ENCODE measurements at regions of chr9 and their contacts with region 1.

Region 1: GRCh38 chr9:123749580-123750202 is 180.2 kb downstream of the DENND1A start:
- DNase-seq: no peak
- ATAC-seq: no peak
- H3K4me3 ChIP-seq: no peak overlapping the region
- H3K27ac ChIP-seq: no peak overlapping the region
- H3K4me1 ChIP-seq: peaks cover 0 to 25% (median 2%) of the 10 kb centered on the region in 12 donors
- H3K27me3 ChIP-seq: no peaks in the 10 kb centered on the region
- CTCF ChIP-seq: no peak
- POLR2A ChIP-seq: no peak

Region 2: GRCh38 chr9:123710299-123710698 is 39.4 kb before region 1 on chr9:
- intact Hi-C with region 1: no loop called
- DNase-seq: no peak
- ATAC-seq: no peak
- H3K4me3 ChIP-seq: no peak overlapping the region
- H3K27ac ChIP-seq: no peak overlapping the region
- H3K4me1 ChIP-seq: no peaks in the 10 kb centered on the region
- H3K27me3 ChIP-seq: no peaks in the 10 kb centered on the region
- CTCF ChIP-seq: no peak
- POLR2A ChIP-seq: no peak

Region 3: DNA sequence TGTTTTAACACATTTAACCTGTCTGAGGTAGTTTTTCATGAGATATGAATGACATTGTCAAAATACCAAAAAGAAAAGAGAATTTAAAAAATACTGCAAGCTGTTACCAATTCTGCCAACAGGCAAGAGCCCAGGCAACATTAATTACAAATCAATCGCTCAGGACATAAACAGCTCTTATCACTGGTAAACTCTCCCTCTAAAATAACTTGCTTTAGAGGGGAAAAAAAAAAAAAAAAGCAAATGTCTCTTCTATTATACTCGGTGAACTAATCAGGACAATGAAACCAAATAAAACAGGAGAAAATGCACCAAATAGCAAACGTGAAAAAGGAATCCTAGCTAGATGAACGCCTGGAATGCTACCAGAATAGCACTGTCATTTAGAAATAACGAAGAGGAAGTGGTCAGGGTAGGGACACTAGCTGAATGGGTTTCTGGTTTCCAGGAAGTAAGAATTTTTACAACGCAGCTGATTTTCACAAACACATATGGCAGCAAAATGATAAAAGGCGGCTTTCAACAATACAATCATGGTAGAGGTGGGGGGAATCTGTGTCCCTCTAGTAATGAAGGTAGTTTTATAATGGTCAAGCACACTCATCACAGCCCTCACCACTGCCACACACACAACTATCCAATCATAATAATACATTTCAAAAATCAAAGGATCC is 85.3 kb after region 1 on chr9:
- intact Hi-C with region 1: loop called in 1 of 10 experiments (anchors 10 kb)
- DNase-seq: no peak
- ATAC-seq: peak in 3 of 4 donors; percentile 60 to 76 (median 75)
- H3K4me3 ChIP-seq: peak overlapping the region in 6 of 12 donors; percentile 8 to 30 (median 24)
- H3K27ac ChIP-seq: peak overlapping the region in 2 of 12 donors; percentile 36 to 77
- H3K4me1 ChIP-seq: peaks cover 0 to 30% (median 7%) of the 10 kb centered on the region in 12 donors
- H3K27me3 ChIP-seq: no peaks in the 10 kb centered on the region
- CTCF ChIP-seq: no peak
- POLR2A ChIP-seq: no peak

Region 4: GRCh38 chr9:123863164-123863855 is 113.6 kb after region 1 on chr9:
- intact Hi-C with region 1: loop called in 1 of 10 experiments (anchors 10 kb)
- DNase-seq: no peak
- ATAC-seq: peak in 1 of 4 donors; percentile 49
- H3K4me3 ChIP-seq: no peak overlapping the region
- H3K27ac ChIP-seq: peak overlapping the region in 1 of 12 donors; percentile 84
- H3K4me1 ChIP-seq: peaks cover 0 to 75% (median 11%) of the 10 kb centered on the region in 12 donors
- H3K27me3 ChIP-seq: no peaks in the 10 kb centered on the region
- CTCF ChIP-seq: no peak
- POLR2A ChIP-seq: no peak

Region 5: GRCh38 chr9:123929870-123930831 is 180.5 kb after region 1 on chr9 and contains the start of gene DENND1A:
- intact Hi-C with region 1: loop called in 2 of 10 experiments (anchors 5 to 10 kb)
- DNase-seq: peak; percentile 93 to 96 (median 95)
- ATAC-seq: peak; percentile 78 to 98 (median 95)
- H3K4me3 ChIP-seq: peak within 1 kb of the TSS; percentile 63 to 94 (median 78)
- H3K27ac ChIP-seq: peak within 1 kb of the TSS in 11 of 12 donors; percentile 41 to 85 (median 70)
- H3K4me1 ChIP-seq: peaks cover 0 to 47% (median 15%) of the 10 kb centered on the region in 12 donors
- H3K27me3 ChIP-seq: no peaks in the 10 kb centered on the region
- CTCF ChIP-seq: no peak
- POLR2A ChIP-seq: peak in 1 of 2 donors; percentile 52
- total RNA-seq, gene DENND1A: 10.6 to 24.0 (median 15.7) TPM

Measured in heart left ventricle (tissue), 16 donors.